Left ventricle myocardium inferior (tissue), 1 donor: ENCODE measurements at regions of chr7 and their contacts with region 1.

Region 1: DNA sequence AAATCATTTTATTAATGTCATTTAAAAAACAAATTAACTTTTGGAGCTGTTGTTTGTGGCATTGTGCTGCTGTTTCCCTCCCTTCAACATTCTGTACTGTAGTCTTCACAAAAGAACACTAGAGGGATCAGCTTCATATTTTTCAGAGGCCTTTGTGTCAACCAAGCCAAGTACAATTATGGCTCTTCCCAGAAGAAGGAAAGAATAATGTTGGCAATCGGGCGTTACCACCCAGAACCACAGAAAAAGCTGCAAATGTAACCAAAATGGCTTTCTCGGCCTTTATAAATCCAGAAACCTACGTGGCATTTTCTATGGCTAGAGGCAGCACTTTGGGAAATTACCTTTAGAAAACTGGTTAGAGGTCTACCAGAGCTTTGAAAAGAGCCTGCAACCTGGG is 98.8 kb upstream of the COL1A2 start:
- DNase-seq: no peak
- H3K4me3 ChIP-seq: peak overlapping the region; percentile 21
- H3K27ac ChIP-seq: peak overlapping the region; percentile 79
- H3K4me1 ChIP-seq: peaks cover 15% of the 10 kb centered on the region
- H3K27me3 ChIP-seq: peaks cover 11% of the 10 kb centered on the region
- CTCF ChIP-seq: peak; percentile 67

Region 2: GRCh38 chr7:93944673-93945072 is 351.2 kb before region 1 on chr7:
- intact Hi-C with region 1: no loop called
- DNase-seq: no peak
- H3K4me3 ChIP-seq: no peak overlapping the region
- H3K27ac ChIP-seq: peak overlapping the region; percentile 81
- H3K4me1 ChIP-seq: peaks cover 33% of the 10 kb centered on the region
- H3K27me3 ChIP-seq: no peaks in the 10 kb centered on the region
- CTCF ChIP-seq: no peak

Region 3: GRCh38 chr7:94395141-94396036 is 99.5 kb after region 1 on chr7:
- intact Hi-C with region 1: loop called (anchors 5 kb)
- DNase-seq: no peak
- H3K4me3 ChIP-seq: peak overlapping the region; percentile 69
- H3K27ac ChIP-seq: peak overlapping the region; percentile 91
- H3K4me1 ChIP-seq: peaks cover 41% of the 10 kb centered on the region
- H3K27me3 ChIP-seq: peaks cover 48% of the 10 kb centered on the region
- CTCF ChIP-seq: peak; percentile 81